Heart right ventricle (tissue), 16 donors: ENCODE measurements at regions of chr17 and their contacts with region 1.

Region 1: GRCh38 chr17:6496116-6496481 is 51.8 kb downstream of the PIMREG start:
- DNase-seq: no peak
- ATAC-seq: peak in 1 of 8 donors; percentile 26
- H3K4me3 ChIP-seq: no peak overlapping the region
- H3K27ac ChIP-seq: no peak overlapping the region
- H3K4me1 ChIP-seq: peaks cover 0 to 15% (median 5%) of the 10 kb centered on the region in 9 donors
- H3K27me3 ChIP-seq: peaks cover 0 to 21% (median 14%) of the 10 kb centered on the region in 7 donors
- CTCF ChIP-seq: no peak

Region 2: DNA sequence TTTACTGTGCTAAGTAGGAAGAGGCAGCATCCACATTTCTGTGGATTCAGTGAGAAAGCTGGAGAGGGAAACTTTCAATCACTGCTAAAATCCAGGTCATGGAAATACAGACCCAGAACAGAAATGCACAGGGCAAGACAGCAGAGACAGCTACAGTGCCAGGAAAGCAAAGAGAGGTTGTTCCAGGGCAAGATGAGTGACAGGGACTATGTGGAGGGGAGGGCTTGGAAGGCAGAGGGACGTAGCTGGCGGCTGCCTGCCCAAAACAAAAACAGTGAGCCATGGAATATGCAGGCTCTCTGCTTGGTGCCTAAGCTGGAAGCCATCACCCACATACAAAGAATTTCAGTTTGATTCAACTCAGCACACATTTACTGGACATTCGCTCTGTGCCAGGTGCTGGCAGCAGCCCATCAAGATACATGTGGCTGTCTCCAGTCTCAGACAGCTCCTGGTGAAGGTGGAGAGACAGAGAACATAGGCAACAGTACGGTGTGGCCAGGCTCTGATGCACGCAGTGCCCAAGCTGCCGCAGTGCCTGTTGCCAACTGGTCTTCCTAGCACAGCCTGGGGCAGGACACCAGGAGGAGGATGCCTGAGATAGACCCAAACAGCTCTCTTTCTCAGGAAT is 149.8 kb before region 1 on chr17:
- intact Hi-C with region 1: no loop called
- DNase-seq: no peak
- ATAC-seq: no peak
- H3K4me3 ChIP-seq: no peak overlapping the region
- H3K27ac ChIP-seq: no peak overlapping the region
- H3K4me1 ChIP-seq: no peaks in the 10 kb centered on the region
- H3K27me3 ChIP-seq: peaks cover 0 to 7% (median 3%) of the 10 kb centered on the region in 7 donors
- CTCF ChIP-seq: no peak

Region 3: DNA sequence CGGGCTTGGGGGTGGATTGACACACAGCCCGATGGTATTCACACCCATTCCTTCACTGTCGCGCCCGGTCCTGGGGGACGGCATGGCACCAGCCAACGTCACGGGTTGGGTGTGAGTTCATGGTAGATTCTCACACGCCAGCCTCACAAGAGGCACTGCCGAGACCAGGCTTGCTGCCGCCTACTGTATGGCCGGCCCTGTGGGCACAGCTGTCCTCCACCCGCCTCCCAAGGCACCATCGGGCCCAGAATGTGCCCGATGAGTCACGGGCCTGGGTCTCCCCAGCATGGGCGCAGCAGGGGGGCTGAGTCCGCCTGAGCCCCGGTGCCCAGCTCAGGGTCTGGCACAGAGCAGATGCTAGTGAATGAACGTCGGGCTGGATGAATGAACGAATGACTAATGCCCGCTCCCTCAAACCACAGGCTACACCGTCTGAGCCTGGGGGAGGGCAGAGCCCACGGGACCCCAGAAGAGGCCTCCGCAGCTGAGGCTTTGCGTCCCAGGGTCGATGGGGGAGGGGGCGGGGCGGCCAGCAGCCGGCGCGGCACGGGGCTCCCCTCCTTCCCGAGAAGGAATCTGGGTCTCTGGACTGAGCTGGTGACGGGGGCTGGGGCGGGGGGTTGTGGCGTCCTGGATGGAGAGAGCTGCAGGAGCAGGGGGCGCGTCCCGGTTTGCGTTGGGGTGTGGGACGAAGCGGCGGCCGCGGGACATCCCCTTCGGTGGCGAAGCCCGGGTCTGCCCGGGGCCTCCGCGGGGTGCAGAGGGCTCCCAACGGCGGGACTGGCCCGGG is 59.4 kb after region 1 on chr17:
- intact Hi-C with region 1: loop called in 1 of 10 experiments (anchors 10 kb)
- DNase-seq: no peak
- ATAC-seq: peak in 7 of 8 donors; percentile 9 to 51 (median 41)
- H3K4me3 ChIP-seq: peak overlapping the region in 9 of 10 donors; percentile 39 to 61 (median 53)
- H3K27ac ChIP-seq: no peak overlapping the region
- H3K4me1 ChIP-seq: peaks cover 7 to 32% (median 13%) of the 10 kb centered on the region in 9 donors
- H3K27me3 ChIP-seq: peaks cover 12 to 47% (median 33%) of the 10 kb centered on the region in 7 donors
- CTCF ChIP-seq: no peak